A549 (cell line): ENCODE measurements at regions of chr7 and their contacts with region 1.

Region 1: GRCh38 chr7:38215735-38216670 is 38.0 kb downstream of the STARD3NL start:
- DNase-seq: peak; percentile 68 to 78
- ATAC-seq: peak; percentile 95 to 98
- H3K4me3 ChIP-seq: no peak overlapping the region
- H3K27ac ChIP-seq: peak overlapping the region in 1 of 2 experiments; percentile 33; a peak in 3 of 6 replicates
- H3K4me1 ChIP-seq: peaks cover 27% of the 10 kb centered on the region
- CTCF ChIP-seq: peak; percentile 89
- EP300 ChIP-seq: no peak
- POLR2A ChIP-seq: no peak
- RAD21 ChIP-seq: peak; percentile 64 to 70

Region 2: GRCh38 chr7:37916673-37917660 is 299.0 kb before region 1 on chr7 and contains the start of gene SFRP4:
- CTCF ChIA-PET with region 1: interaction called, 29 read pairs
- POLR2A ChIA-PET with region 1: interaction called, 6 read pairs
- DNase-seq: peak; percentile 47 to 84
- ATAC-seq: peak; percentile 66 to 74
- H3K4me3 ChIP-seq: peak within 1 kb of the TSS; percentile 64
- H3K27ac ChIP-seq: peak within 1 kb of the TSS; percentile 81 to 93
- H3K4me1 ChIP-seq: peaks cover 22% of the 10 kb centered on the region
- CTCF ChIP-seq: peak; percentile 73
- EP300 ChIP-seq: no peak
- POLR2A ChIP-seq: peak; percentile 10; the same call in 1 of the 2 replicates
- RAD21 ChIP-seq: peak; percentile 66 to 75
- polyA plus RNA-seq, gene SFRP4: 9.1 and 11.9 TPM in 2 replicates

Region 3: DNA sequence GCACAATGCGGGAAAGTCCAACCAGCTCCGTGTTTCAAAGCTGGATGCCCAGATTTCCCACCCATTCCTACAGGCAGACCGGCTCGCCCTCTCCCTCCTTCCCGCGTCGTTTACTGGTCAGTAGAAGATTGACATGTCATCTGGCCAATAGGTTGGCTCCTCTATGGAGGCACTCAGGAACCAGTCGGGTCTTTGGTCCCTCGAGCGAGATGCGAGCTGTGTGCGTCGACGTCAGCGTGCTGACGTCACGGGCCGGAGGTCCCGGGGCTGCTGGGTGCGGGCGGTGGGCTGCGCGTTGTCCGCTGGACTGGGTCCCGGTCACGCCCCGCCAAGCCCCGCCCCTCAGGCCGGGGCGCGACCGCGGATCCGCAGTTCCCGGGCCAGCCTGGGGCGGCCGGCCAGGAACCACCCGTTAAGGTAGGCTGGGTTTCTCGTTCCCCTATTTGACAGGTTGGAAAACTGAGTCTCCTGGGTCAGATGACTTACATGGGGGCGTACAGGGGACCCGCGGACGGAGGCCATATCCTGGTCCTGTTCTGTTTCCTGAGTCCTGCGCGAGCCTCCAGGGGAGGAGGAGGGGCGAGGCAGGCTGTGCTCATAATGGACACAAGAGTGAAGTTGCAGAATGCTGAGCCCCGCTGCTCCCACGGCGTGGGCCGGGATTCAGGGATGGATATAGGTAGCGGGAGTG is 37.9 kb before region 1 on chr7 and contains the start of gene STARD3NL:
- CTCF ChIA-PET with region 1: interaction called, 10 read pairs
- POLR2A ChIA-PET with region 1: interaction called, 4 read pairs
- DNase-seq: peak; percentile 96 to 100
- ATAC-seq: peak; percentile 99
- H3K4me3 ChIP-seq: peak within 1 kb of the TSS; percentile 73
- H3K27ac ChIP-seq: peak within 1 kb of the TSS; percentile 91 to 94
- H3K4me1 ChIP-seq: peaks cover 25% of the 10 kb centered on the region
- CTCF ChIP-seq: no peak
- EP300 ChIP-seq: no peak
- POLR2A ChIP-seq: peak; percentile 66
- RAD21 ChIP-seq: no peak
- polyA plus RNA-seq, gene STARD3NL: 78.1 and 104 TPM in 2 replicates

Region 4: GRCh38 chr7:38195804-38196595 is 20.0 kb before region 1 on chr7:
- CTCF ChIA-PET with region 1: interaction called, 50 read pairs
- POLR2A ChIA-PET with region 1: interaction called, 3 read pairs
- DNase-seq: peak in 1 of 2 experiments; percentile 20
- ATAC-seq: peak; percentile 52 to 66; a peak in 4 of 6 replicates
- H3K4me3 ChIP-seq: no peak overlapping the region
- H3K27ac ChIP-seq: peak overlapping the region; percentile 53 to 78
- H3K4me1 ChIP-seq: peaks cover 38% of the 10 kb centered on the region
- CTCF ChIP-seq: no peak
- EP300 ChIP-seq: no peak
- POLR2A ChIP-seq: no peak
- RAD21 ChIP-seq: no peak

Region 5: GRCh38 chr7:38248069-38248567 is 32.1 kb after region 1 on chr7:
- CTCF ChIA-PET with region 1: no interaction called
- POLR2A ChIA-PET with region 1: no interaction called
- DNase-seq: no peak
- ATAC-seq: no peak
- H3K4me3 ChIP-seq: no peak overlapping the region
- H3K27ac ChIP-seq: no peak overlapping the region
- H3K4me1 ChIP-seq: no peaks in the 10 kb centered on the region
- CTCF ChIP-seq: no peak
- EP300 ChIP-seq: no peak
- POLR2A ChIP-seq: no peak
- RAD21 ChIP-seq: no peak

Region 6: DNA sequence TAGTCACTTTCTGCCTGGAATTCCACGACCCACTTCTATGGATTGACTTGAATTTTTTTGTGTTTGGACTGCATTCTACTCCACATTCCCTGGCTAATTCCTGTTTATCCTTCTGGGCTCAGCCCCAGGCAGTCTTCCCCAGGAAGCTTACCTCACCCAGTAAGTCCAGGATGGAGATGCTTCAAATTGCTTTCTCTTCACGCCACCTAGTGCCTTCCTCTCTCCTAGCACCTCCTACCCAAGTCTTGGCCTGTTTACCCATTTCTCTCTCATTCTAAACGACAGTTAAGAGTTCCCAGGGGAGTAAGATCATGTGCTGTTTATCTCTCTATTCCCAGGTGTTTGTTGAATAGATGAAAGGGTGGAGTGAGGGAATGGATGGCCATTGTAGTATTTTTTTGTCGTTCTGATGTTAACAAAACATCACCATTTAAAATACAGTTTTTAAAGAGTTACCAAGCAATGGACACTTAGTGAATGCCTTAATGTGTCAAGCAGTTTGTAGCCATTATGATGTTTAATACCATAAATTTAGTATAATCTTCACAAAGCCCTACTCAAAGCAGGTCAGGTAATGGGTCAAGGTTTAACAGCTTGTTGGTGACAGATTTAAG is 102.9 kb after region 1 on chr7:
- CTCF ChIA-PET with region 1: interaction called, 18 read pairs
- POLR2A ChIA-PET with region 1: interaction called, 4 read pairs
- DNase-seq: peak; percentile 61 to 79
- ATAC-seq: peak; percentile 95 to 98
- H3K4me3 ChIP-seq: no peak overlapping the region
- H3K27ac ChIP-seq: no peak overlapping the region
- H3K4me1 ChIP-seq: peaks cover 13% of the 10 kb centered on the region; the same call in 2 of the 3 replicates
- CTCF ChIP-seq: peak; percentile 74
- EP300 ChIP-seq: no peak
- POLR2A ChIP-seq: no peak
- RAD21 ChIP-seq: peak; percentile 80 to 86